Mammary epithelial cell (primary cell): ENCODE measurements at regions of chr1 and their contacts with region 1.

Region 1: GRCh38 chr1:226360106-226360746 is 47.7 kb downstream of the PARP1 start:
- DNase-seq: no peak
- H3K4me3 ChIP-seq: no peak overlapping the region
- H3K27ac ChIP-seq: no peak overlapping the region
- H3K4me1 ChIP-seq: no peaks in the 10 kb centered on the region
- H3K27me3 ChIP-seq: no peaks in the 10 kb centered on the region
- CTCF ChIP-seq: no peak

Region 2: DNA sequence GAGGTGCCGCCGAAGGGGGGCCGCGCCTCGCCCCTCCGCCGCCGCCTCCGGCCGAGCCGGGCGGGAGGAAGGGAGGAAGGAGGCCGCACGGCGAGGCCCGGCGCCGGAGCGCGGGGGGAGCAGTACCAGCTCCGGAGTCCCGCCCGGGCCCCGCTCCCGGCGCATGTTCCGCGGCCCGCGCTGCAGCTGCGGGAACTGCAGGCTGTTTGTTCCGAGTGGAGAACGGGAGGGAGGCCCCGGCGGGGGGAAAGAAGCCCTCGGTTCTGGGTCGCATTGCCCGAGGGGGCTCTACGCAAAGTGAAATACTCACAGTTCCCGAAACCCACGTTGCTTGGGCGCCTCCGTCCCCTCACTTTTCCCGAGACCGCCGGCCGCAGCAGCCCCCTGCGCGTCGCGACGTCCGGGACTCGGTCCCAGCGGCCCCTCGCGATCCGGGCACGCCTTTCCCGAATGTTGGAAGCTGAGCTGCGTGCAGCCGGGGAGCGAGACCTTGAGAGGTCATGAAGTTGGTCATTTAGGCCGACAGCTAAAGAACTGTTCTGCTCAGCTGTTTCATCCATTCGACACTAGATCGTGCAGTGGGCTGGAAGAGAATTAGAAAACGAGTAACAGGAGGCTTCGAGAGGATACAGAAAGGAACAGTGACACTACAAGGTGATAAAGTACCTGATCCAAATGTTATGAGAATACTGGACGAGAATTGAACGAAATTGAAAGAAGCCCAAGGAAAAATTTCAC is 50.7 kb before region 1 on chr1:
- CTCF ChIA-PET with region 1: no interaction called
- dilution Hi-C with region 1: loop called (anchors 5 kb)
- in situ Hi-C with region 1: no loop called
- intact Hi-C with region 1: no loop called
- DNase-seq: no peak
- H3K4me3 ChIP-seq: peak overlapping the region; percentile 61 to 100 (median 89)
- H3K27ac ChIP-seq: peak overlapping the region; percentile 38
- H3K4me1 ChIP-seq: peaks cover 23% of the 10 kb centered on the region
- H3K27me3 ChIP-seq: no peaks in the 10 kb centered on the region
- CTCF ChIP-seq: peak in 1 of 2 donors; percentile 22

Region 3: DNA sequence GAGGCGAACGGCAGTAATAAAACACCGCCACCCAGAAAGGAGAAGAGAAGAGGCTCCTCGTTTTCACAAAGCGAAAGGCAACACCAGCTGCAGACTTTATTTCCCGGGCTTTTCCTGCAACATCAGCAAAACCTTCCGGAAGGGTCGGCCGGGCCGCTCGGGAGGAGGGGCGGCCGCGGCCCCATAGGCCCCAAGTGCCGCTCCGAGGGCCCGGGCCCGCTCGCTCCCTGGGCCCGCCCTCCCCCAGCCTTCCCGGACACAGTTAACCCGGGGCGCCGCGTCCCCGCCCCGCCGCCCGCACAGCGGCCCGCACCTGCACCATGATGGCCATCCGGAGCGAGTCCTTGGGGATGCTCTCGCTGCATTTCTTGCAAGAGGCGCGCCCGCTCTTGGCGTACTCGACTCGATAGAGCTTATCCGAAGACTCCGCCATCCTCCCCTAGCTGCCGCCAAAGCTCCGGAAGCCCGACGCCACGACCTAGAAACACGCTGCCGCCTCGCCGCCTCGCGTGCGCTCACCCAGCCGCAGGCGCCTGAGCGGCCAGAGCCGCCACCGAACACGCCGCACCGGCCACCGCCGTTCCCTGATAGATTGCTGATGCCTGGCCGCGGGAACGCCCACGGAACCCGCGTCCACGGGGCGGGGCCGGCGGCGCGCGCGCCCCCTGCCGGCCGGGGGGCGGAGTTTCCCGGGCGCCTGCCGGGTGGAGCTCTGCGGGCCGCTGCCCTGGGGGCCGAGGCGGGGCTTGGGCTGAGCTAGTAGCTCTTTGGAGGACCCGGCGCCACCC is 47.5 kb after region 1 on chr1 and contains the start of gene PARP1:
- CTCF ChIA-PET with region 1: no interaction called
- dilution Hi-C with region 1: loop called (anchors 5 kb)
- in situ Hi-C with region 1: no loop called
- intact Hi-C with region 1: no loop called
- DNase-seq: peak; percentile 79
- H3K4me3 ChIP-seq: peak within 1 kb of the TSS; percentile 75 to 83 (median 77)
- H3K27ac ChIP-seq: peak within 1 kb of the TSS; percentile 40
- H3K4me1 ChIP-seq: peaks cover 18% of the 10 kb centered on the region
- H3K27me3 ChIP-seq: no peaks in the 10 kb centered on the region
- CTCF ChIP-seq: peak; percentile 22 to 42
- total RNA-seq, gene PARP1: 67.7 to 80.8 TPM

Region 4: GRCh38 chr1:226679853-226680516 is 319.8 kb after region 1 on chr1:
- CTCF ChIA-PET with region 1: no interaction called
- dilution Hi-C with region 1: no loop called
- in situ Hi-C with region 1: no loop called
- intact Hi-C with region 1: no loop called
- DNase-seq: no peak
- H3K4me3 ChIP-seq: peak overlapping the region in 1 of 3 experiments; percentile 16
- H3K27ac ChIP-seq: no peak overlapping the region
- H3K4me1 ChIP-seq: peaks cover 23% of the 10 kb centered on the region
- H3K27me3 ChIP-seq: no peaks in the 10 kb centered on the region
- CTCF ChIP-seq: no peak